ENCODE measurements at regions of chr7 and their contacts with region 1.

Region 1: GRCh38 chr7:140810830-140811556 is 113.7 kb downstream of the BRAF start:
- DNase-seq: peak; percentile 52 to 75
- ATAC-seq: peak; percentile 100
- H3K4me3 ChIP-seq: no peak overlapping the region
- H3K27ac ChIP-seq: no peak overlapping the region
- H3K4me1 ChIP-seq: no peaks in the 10 kb centered on the region
- CTCF ChIP-seq: peak; percentile 85
- EP300 ChIP-seq: no peak
- POLR2A ChIP-seq: no peak
- RAD21 ChIP-seq: peak; percentile 76 to 81

Region 2: DNA sequence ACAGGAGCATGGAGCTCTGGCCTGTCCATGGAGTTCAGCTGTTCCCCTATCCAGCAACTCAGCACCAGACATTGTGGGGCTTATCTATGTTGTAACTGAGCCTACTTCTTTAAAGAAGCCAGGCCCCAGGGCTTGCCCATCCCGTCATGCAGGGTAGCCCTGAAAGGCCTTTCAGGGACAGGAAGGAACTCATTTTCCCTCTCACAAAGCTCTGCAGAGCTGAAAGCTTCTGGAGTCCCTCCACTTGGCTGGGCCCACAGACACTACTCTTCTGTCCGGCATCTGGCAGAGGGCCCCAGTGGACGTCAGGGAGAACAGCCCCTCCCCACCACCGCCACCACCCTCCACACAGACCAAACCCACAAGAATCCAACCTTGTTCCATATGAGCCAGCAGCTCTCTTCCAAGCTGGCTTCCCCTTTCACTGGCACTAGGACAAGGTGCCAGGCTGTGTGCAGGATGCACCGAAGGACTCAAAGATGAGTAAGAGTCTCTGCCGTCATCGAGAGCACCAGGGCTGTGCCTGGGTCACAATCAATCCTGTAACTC is 203.5 kb before region 1 on chr7:
- CTCF ChIA-PET with region 1: no interaction called
- POLR2A ChIA-PET with region 1: no interaction called
- DNase-seq: no peak
- ATAC-seq: no peak
- H3K4me3 ChIP-seq: no peak overlapping the region
- H3K27ac ChIP-seq: no peak overlapping the region
- H3K4me1 ChIP-seq: peaks cover 16% of the 10 kb centered on the region
- CTCF ChIP-seq: no peak
- EP300 ChIP-seq: no peak
- POLR2A ChIP-seq: no peak
- RAD21 ChIP-seq: no peak

Region 3: DNA sequence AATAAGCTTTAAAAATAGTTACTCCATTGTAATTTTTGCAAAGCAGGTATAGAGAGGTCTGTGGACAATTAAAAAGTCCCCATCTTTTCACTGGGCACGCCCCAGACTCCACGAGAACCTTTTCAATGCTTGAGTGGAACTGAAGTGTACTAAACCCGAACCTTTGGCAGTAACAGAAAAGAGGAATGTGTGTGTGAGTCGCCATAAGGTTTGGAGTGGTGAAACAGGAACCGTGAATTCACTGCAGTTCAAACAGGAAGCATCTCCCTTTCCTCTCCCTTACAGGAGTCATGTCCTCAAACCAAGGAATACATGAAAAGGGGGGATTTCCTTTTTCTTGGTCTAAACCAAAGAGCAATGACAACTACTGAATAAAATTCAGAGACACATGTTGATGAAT is 91.3 kb before region 1 on chr7:
- CTCF ChIA-PET with region 1: no interaction called
- POLR2A ChIA-PET with region 1: no interaction called
- DNase-seq: no peak
- ATAC-seq: no peak
- H3K4me3 ChIP-seq: no peak overlapping the region
- H3K27ac ChIP-seq: no peak overlapping the region
- H3K4me1 ChIP-seq: no peaks in the 10 kb centered on the region
- CTCF ChIP-seq: no peak
- EP300 ChIP-seq: no peak
- POLR2A ChIP-seq: no peak
- RAD21 ChIP-seq: no peak

Region 4: GRCh38 chr7:140831724-140832123 is 20.7 kb after region 1 on chr7:
- CTCF ChIA-PET with region 1: interaction called, 15 read pairs
- POLR2A ChIA-PET with region 1: no interaction called
- DNase-seq: no peak
- ATAC-seq: no peak
- H3K4me3 ChIP-seq: no peak overlapping the region
- H3K27ac ChIP-seq: no peak overlapping the region
- H3K4me1 ChIP-seq: no peaks in the 10 kb centered on the region
- CTCF ChIP-seq: no peak
- EP300 ChIP-seq: no peak
- POLR2A ChIP-seq: no peak
- RAD21 ChIP-seq: no peak

Region 5: GRCh38 chr7:140889645-140890044 is 78.7 kb after region 1 on chr7:
- CTCF ChIA-PET with region 1: no interaction called
- POLR2A ChIA-PET with region 1: no interaction called
- DNase-seq: no peak
- ATAC-seq: no peak
- H3K4me3 ChIP-seq: no peak overlapping the region
- H3K27ac ChIP-seq: no peak overlapping the region
- H3K4me1 ChIP-seq: peaks cover 10% of the 10 kb centered on the region; the same call in 1 of the 3 replicates
- CTCF ChIP-seq: no peak
- EP300 ChIP-seq: no peak
- POLR2A ChIP-seq: no peak
- RAD21 ChIP-seq: no peak

Region 6: GRCh38 chr7:141402277-141402996 is 591.4 kb after region 1 on chr7:
- CTCF ChIA-PET with region 1: no interaction called
- POLR2A ChIA-PET with region 1: no interaction called
- DNase-seq: no peak
- ATAC-seq: no peak
- H3K4me3 ChIP-seq: no peak overlapping the region
- H3K27ac ChIP-seq: no peak overlapping the region
- H3K4me1 ChIP-seq: no peaks in the 10 kb centered on the region
- CTCF ChIP-seq: no peak
- EP300 ChIP-seq: no peak
- POLR2A ChIP-seq: no peak
- RAD21 ChIP-seq: no peak